Left cardiac atrium (tissue), 4 donors: ENCODE measurements at regions of chr3 and their contacts with region 1.

Region 1: GRCh38 chr3:129249276-129250065 is at the start of gene COPG1:
- DNase-seq: peak; percentile 88
- ATAC-seq: peak; percentile 96
- total RNA-seq, gene COPG1: 109 to 149 TPM

Region 2: GRCh38 chr3:128969993-128970739 is 279.3 kb before region 1 on chr3:
- intact Hi-C with region 1: loop called in 1 of 2 experiments (anchors 2 kb)
- DNase-seq: peak; percentile 48
- ATAC-seq: peak in 1 of 2 donors; percentile 44

Region 3: GRCh38 chr3:129058441-129059200 is 190.8 kb before region 1 on chr3:
- intact Hi-C with region 1: loop called in 1 of 2 experiments (anchors 10 kb)
- DNase-seq: no peak
- ATAC-seq: peak; percentile 31 to 44

Region 4: GRCh38 chr3:129183569-129184395 is 65.7 kb before region 1 on chr3 and contains the start of gene CNBP:
- intact Hi-C with region 1: loop called in 1 of 2 experiments (anchors 5 kb)
- DNase-seq: peak; percentile 95
- ATAC-seq: peak; percentile 99
- total RNA-seq, gene CNBP: 342 to 378 TPM